Panc1 (cell line): ENCODE measurements at regions of chr17 and their contacts with region 1.

Region 1: DNA sequence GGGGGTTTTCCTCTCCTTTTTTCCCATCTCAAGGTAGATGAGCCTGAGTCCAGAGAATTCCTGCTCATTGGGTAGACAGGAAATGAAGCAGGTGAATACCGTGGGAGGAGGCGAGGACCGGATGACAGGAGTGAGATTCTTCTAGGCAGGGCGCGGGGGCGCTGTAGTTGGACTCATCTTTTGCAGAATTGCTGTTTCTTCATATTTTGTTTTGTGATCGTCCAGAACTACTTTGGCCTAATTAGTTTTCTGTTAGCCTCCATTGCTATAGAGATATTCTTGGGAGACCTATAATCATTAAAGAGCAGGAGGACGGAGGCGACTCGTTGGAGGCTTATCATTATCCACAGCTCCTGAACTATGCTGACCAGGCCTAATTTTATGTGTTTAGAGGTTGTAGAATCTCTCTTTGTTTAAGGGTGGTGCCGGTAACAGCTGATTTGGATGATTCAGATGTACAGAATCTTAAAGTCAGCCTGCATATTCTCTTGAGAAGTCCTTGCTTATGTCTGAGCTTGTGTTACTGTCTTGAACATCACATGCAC is 650 bp downstream of the ATP6V0A1 start:
- DNase-seq: no peak
- ATAC-seq: peak; percentile 74
- H3K4me3 ChIP-seq: peak overlapping the region; percentile 91 to 93
- H3K27ac ChIP-seq: peak overlapping the region; percentile 92
- H3K4me1 ChIP-seq: peaks cover 5% of the 10 kb centered on the region; the same call in 1 of the 2 replicates
- H3K27me3 ChIP-seq: no peaks in the 10 kb centered on the region
- CTCF ChIP-seq: peak; percentile 59

Region 2: DNA sequence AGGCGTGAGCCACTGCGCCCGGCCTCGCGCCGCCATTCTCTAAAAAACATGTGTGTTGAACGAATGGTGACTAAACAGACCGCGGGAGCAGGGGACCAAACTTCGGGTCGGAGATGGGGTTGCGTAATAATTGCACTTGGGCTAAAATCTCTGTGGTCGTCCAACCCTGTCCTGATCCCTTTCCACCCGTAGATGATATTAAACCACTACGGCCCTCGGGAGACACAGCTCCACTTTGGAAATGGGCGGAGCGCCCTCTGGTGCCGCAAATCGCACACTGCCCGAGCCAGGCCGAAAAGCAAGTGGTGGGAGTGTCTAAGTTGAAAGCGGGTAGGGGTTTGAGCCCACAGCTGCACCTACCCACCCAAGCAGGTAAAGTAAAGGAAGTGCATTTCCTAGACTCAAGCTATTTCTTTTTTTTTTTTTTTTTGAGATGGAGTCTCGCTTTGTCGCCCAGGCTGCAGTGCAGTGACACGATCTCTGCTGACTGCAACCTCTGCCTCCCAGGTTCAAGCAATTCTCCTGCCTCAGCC is 53.3 kb before region 1 on chr17:
- CTCF ChIA-PET with region 1: no interaction called
- POLR2A ChIA-PET with region 1: interaction called, 14 read pairs
- in situ Hi-C with region 1: no loop called
- intact Hi-C with region 1: no loop called
- DNase-seq: no peak
- ATAC-seq: peak; percentile 43
- H3K4me3 ChIP-seq: no peak overlapping the region
- H3K27ac ChIP-seq: no peak overlapping the region
- H3K4me1 ChIP-seq: peaks cover 53% of the 10 kb centered on the region
- H3K27me3 ChIP-seq: no peaks in the 10 kb centered on the region
- CTCF ChIP-seq: peak; percentile 75

Region 3: DNA sequence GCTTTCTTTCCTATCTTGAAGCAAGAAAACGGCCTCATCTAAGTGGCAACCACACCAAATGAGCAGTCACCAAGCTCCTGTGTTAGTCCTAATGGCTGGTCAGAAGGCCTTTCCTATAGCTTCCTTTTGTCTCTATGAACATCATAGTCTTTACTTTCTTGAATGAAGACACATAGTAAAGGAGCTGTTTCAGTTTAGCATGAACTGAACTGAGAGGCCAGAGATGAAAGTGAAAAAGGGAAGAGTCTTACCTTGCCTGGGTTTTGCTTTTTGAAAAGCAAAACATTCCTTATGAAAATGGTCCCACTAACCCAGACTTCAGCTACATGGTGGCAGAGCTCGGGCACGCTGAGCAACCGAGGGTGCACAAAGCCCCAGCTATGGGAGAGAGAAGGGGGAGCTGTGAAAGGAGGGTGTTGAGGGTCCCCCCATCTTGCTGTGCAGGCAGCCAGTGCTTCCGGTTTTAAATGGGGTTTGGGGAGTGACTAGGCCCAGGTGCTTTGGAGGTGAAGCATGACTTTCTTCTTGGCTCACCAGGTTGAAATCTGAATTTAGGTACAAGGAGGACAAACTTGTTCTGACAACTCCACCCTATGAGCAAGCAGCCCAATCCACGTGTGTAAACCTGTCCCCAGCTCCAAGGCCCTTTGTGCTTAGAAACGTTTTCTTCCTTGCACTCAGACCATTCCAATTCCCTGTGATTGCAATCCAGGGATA is 127.3 kb after region 1 on chr17:
- CTCF ChIA-PET with region 1: no interaction called
- POLR2A ChIA-PET with region 1: no interaction called
- in situ Hi-C with region 1: no loop called
- intact Hi-C with region 1: no loop called
- DNase-seq: no peak
- ATAC-seq: no peak
- H3K4me3 ChIP-seq: no peak overlapping the region
- H3K27ac ChIP-seq: no peak overlapping the region
- H3K4me1 ChIP-seq: no peaks in the 10 kb centered on the region
- H3K27me3 ChIP-seq: no peaks in the 10 kb centered on the region
- CTCF ChIP-seq: no peak

Region 4: DNA sequence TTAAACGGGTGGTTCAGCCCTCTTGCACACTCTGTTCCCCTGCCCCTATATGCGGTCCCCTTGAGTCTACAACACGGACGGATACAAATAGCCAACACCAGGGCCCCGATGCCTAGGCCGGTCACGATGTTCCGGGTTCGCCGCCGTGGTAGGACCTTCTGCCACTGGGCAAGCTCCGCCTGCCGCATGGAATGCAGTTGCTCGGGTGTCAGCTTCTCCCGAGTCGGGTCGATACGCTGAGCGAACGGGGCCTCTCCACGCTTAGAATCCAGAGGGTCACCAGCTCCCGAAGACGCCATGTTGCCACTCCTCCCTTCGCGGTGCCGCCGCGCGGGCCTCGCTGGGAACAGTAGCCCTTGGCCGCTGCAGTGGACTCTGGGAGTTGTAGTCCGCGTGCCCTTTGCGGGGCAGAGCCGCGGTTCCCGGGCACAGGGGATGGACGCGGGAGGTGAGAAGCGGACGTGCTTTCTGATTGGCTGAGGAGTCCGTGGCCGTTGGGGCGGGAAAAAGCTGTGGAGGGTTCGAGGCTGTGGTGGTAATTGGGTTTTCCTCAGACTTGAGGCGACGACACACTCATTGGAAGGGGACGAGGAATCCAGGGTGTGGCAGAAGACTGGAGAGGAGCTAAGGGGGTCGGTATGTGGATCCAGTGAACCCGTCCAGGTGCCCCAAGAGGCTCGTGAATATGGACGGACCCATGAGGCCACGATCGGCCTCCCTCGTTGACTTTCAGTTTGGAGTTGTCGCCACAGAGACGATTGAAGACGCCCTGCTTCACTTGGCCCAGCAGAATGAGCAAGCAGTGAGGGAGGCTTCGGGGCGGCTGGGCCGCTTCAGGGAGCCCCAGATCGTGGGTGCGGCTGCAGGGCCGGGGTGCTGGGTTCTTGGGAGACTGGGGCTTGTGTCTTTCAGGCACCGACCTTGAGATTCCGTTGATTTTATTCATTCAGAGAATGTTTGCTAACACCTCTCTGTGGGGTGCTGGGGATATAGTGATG is 339.4 kb after region 1 on chr17 and contains the starts of genes CNTD1 and COA3:
- CTCF ChIA-PET with region 1: no interaction called
- POLR2A ChIA-PET with region 1: no interaction called
- in situ Hi-C with region 1: no loop called
- intact Hi-C with region 1: no loop called
- DNase-seq: peak; percentile 20
- ATAC-seq: peak; percentile 98
- H3K4me3 ChIP-seq: peak within 1 kb of the TSS; percentile 90 to 92
- H3K27ac ChIP-seq: peak within 1 kb of the TSS; percentile 86
- H3K4me1 ChIP-seq: peaks cover 13% of the 10 kb centered on the region
- H3K27me3 ChIP-seq: no peaks in the 10 kb centered on the region
- CTCF ChIP-seq: no peak
- total RNA-seq, gene CNTD1: 0.13 TPM
- total RNA-seq, gene COA3: 48.8 TPM